ENCODE measurements at regions of chr2 and their contacts with region 1.

Region 1: GRCh38 chr2:147288131-147288530 is 556.7 kb upstream of the ACVR2A start:
- DNase-seq: no peak
- H3K4me3 ChIP-seq: no peak overlapping the region
- H3K27ac ChIP-seq: no peak overlapping the region
- H3K4me1 ChIP-seq: no peaks in the 10 kb centered on the region
- CTCF ChIP-seq: no peak

Region 2: GRCh38 chr2:147223119-147223518 is 65.0 kb before region 1 on chr2:
- CTCF ChIA-PET with region 1: no interaction called
- POLR2A ChIA-PET with region 1: no interaction called
- intact Hi-C with region 1: loop called (anchors 2 kb)
- DNase-seq: no peak
- H3K4me3 ChIP-seq: no peak overlapping the region
- H3K27ac ChIP-seq: no peak overlapping the region
- H3K4me1 ChIP-seq: no peaks in the 10 kb centered on the region
- CTCF ChIP-seq: no peak